GM12878 (cell line): ENCODE measurements at regions of chr6 and their contacts with region 1.

Region 1: GRCh38 chr6:113805173-113805790 is 51.9 kb upstream of the MARCKS start:
- DNase-seq: peak; percentile 71
- ATAC-seq: peak; percentile 92
- H3K4me3 ChIP-seq: peak overlapping the region; percentile 56; the same call in 1 of the 2 replicates
- H3K27ac ChIP-seq: peak overlapping the region; percentile 71; the same call in 1 of the 2 replicates
- H3K4me1 ChIP-seq: peaks cover 29% of the 10 kb centered on the region
- H3K27me3 ChIP-seq: no peaks in the 10 kb centered on the region
- CTCF ChIP-seq: no peak
- EP300 ChIP-seq: peak; percentile 45 to 83; a peak in 3 of 4 replicates
- POLR2A ChIP-seq: no peak
- RAD21 ChIP-seq: no peak

Region 2: DNA sequence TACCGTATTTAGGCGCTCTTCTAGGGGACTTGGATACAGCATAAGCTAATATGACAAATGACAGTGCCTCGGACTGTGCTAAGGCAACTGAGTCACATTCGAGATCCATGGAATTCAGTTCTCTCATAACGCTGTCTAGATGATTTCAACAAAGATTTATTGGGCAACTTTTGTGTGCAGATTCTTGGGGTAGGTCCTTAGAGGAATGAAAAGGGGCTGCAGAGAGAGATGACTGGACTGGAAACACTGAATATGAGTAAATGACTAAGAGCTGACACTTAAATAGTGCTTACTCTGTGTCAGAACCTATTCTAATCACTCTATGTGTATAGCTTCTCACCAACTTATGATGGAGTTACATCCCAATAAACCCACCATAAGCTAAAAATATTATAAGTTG is 15.5 kb after region 1 on chr6:
- CTCF ChIA-PET with region 1: interaction called, 7 read pairs
- POLR2A ChIA-PET with region 1: interaction called, 6 read pairs
- RAD21 ChIA-PET with region 1: interaction called, 4 read pairs
- SMC1A ChIA-PET with region 1: interaction called, 10 read pairs
- in situ Hi-C with region 1: no loop called
- intact Hi-C with region 1: no loop called
- DNase-seq: no peak
- ATAC-seq: no peak
- H3K4me3 ChIP-seq: no peak overlapping the region
- H3K27ac ChIP-seq: no peak overlapping the region
- H3K4me1 ChIP-seq: no peaks in the 10 kb centered on the region
- H3K27me3 ChIP-seq: no peaks in the 10 kb centered on the region
- CTCF ChIP-seq: no peak
- EP300 ChIP-seq: no peak
- POLR2A ChIP-seq: no peak
- RAD21 ChIP-seq: no peak

Region 3: DNA sequence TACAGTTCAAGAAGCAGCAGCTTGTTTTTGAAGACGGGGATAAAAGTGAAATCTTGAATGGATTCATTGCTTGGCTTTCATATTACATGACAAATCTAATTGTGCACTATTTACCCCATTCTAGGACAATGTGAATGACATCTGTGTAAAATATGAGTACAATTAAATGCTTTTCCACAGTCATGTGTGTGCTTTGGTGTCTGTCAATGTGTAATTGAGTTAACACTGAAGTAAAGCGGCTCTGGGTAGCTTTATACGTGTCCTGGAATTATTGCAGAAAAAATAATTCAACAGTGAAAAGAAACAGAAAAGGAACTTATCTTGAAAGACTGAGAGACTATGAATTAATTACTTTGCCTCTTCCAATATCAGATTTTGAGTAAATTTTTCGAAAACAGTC is 771.0 kb after region 1 on chr6:
- CTCF ChIA-PET with region 1: no interaction called
- POLR2A ChIA-PET with region 1: no interaction called
- RAD21 ChIA-PET with region 1: no interaction called
- SMC1A ChIA-PET with region 1: no interaction called
- in situ Hi-C with region 1: no loop called
- intact Hi-C with region 1: no loop called
- DNase-seq: no peak
- ATAC-seq: no peak
- H3K4me3 ChIP-seq: no peak overlapping the region
- H3K27ac ChIP-seq: no peak overlapping the region
- H3K4me1 ChIP-seq: no peaks in the 10 kb centered on the region
- H3K27me3 ChIP-seq: no peaks in the 10 kb centered on the region
- CTCF ChIP-seq: no peak
- EP300 ChIP-seq: no peak
- POLR2A ChIP-seq: no peak
- RAD21 ChIP-seq: no peak